GM13977 (cell line): ENCODE measurements at regions of chr6 and their contacts with region 1.

Region 1: GRCh38 chr6:126657561-126658175 is 317.8 kb downstream of the CENPW start:
- DNase-seq: peak; percentile 21
- CTCF ChIP-seq: peak; percentile 57

Region 2: GRCh38 chr6:126176282-126176681 is 481.4 kb before region 1 on chr6:
- in situ Hi-C with region 1: loop called (anchors 25 kb)
- DNase-seq: no peak
- CTCF ChIP-seq: peak; percentile 48

Region 3: GRCh38 chr6:126811321-126811720 is 153.7 kb after region 1 on chr6:
- in situ Hi-C with region 1: no loop called
- DNase-seq: no peak
- CTCF ChIP-seq: no peak